CD4-positive, alpha-beta memory T cell (primary cell): ENCODE measurements at regions of chr11 and their contacts with region 1.

Region 1: GRCh38 chr11:33257897-33258630 is 883 bp downstream of the HIPK3 start:
- DNase-seq: peak; percentile 77 to 85 (median 80)
- H3K4me3 ChIP-seq: peak overlapping the region; percentile 53 to 85
- H3K4me3 Mint-ChIP-seq: peak overlapping the region; percentile 90 to 99 (median 96)
- H3K27ac ChIP-seq: peak overlapping the region; percentile 96
- H3K27ac Mint-ChIP-seq: peak overlapping the region; percentile 96 to 99 (median 98)
- H3K4me1 ChIP-seq: peaks cover 42% of the 10 kb centered on the region
- H3K4me1 Mint-ChIP-seq: peaks cover 29 to 51% (median 39%) of the 10 kb centered on the region in 4 donors
- H3K27me3 ChIP-seq: no peaks in the 10 kb centered on the region
- H3K27me3 Mint-ChIP-seq: no peaks in the 10 kb centered on the region

Region 2: DNA sequence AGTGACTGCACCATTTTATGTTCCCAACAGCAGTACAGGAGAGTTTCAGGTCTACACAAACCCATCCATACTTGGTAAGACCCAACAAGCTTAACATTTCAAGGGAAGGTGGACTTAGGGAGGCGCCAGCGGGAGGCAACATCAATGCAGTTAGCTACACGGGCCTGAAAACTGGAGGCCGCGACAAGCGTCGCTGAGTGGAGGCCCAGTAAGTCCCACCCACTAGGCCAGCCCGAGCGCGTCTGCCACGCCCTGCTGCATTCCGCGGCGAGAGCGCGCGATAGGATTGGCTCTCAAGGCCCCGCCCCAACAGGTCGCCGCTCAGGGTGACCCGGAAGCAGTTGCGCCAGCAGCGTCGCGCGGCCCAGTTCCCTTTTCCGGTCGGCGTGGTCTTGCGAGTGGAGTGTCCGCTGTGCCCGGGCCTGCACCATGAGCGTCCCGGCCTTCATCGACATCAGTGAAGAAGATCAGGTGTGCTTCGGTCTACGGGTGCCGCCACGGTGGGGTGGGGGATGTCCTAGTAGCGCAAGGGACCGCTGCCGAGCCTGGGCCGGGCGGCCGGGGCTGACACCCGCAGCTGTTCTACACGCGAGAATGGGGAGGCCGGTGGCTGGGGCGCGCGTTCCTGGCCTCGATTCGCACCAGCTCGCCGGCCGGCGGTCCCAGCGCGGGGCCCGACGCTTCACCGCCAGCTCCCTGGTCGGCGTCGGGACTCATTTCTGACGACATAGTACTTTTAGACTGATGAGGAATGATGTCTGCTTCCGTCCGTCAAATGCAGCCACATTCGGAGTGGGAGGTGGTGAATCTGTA is 674.4 kb before region 1 on chr11 and contains the start of gene EIF3M:
- CTCF ChIA-PET with region 1: no interaction called
- POLR2A ChIA-PET with region 1: interaction called, 3 read pairs
- intact Hi-C with region 1: loop called (anchors 5 kb)
- DNase-seq: peak; percentile 94 to 95 (median 94)
- H3K4me3 ChIP-seq: peak within 1 kb of the TSS; percentile 73 to 89
- H3K4me3 Mint-ChIP-seq: peak within 1 kb of the TSS; percentile 94 to 99 (median 97)
- H3K27ac ChIP-seq: peak within 1 kb of the TSS; percentile 93
- H3K27ac Mint-ChIP-seq: peak within 1 kb of the TSS; percentile 95 to 99 (median 98)
- H3K4me1 ChIP-seq: peaks cover 41% of the 10 kb centered on the region
- H3K4me1 Mint-ChIP-seq: peaks cover 31 to 51% (median 39%) of the 10 kb centered on the region in 4 donors
- H3K27me3 ChIP-seq: no peaks in the 10 kb centered on the region
- H3K27me3 Mint-ChIP-seq: no peaks in the 10 kb centered on the region
- total RNA-seq, gene EIF3M: 214 to 223 TPM

Region 3: DNA sequence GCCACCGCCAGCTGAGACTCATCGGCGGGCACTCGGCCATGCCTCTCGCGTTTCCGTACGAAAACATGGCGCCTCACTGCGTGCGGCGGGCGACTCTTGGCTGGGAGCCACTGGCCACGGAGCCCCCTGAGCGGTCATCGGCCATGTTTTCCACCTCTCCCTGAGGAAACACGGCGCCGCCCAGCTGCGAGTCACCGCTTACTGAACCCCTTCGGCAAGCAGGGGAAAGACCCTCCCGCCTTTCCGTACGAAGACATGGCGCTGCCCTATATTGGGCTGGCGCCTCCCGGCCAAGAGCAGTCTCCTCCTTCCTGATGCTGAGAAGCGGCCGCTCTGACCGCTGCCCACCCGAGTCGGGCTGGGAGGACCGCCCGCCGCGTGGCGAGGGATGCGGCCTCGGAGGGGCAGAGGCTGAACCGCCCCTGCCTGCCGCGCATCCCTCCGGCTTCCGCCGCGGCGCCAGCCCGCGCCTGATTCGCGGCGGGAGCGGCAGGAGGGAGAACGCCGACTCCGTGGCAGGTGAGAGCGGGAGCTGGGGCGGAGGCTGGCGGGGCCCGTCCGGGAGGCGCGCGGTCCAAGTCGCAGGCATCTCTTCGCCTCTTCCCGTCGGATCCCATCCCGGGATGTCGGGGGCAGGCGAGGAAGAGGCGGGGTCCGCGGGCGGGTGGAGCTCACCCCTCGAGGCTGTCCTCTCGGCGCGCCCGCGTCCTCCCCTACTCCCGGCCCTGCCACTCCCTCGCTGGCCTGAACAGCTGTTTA is 218.6 kb before region 1 on chr11 and contains the start of gene TCP11L1:
- CTCF ChIA-PET with region 1: no interaction called
- POLR2A ChIA-PET with region 1: interaction called, 4 read pairs
- intact Hi-C with region 1: loop called (anchors 1 kb)
- DNase-seq: peak; percentile 74 to 90 (median 80)
- H3K4me3 ChIP-seq: peak within 1 kb of the TSS; percentile 62 to 73
- H3K4me3 Mint-ChIP-seq: peak within 1 kb of the TSS; percentile 93 to 95 (median 95)
- H3K27ac ChIP-seq: peak within 1 kb of the TSS; percentile 78
- H3K27ac Mint-ChIP-seq: peak within 1 kb of the TSS; percentile 92 to 98 (median 95)
- H3K4me1 ChIP-seq: peaks cover 11% of the 10 kb centered on the region
- H3K4me1 Mint-ChIP-seq: peaks cover 8 to 19% (median 11%) of the 10 kb centered on the region in 4 donors
- H3K27me3 ChIP-seq: no peaks in the 10 kb centered on the region
- H3K27me3 Mint-ChIP-seq: peaks cover 2 to 7% of the 10 kb centered on the region in 2 donors
- total RNA-seq, gene TCP11L1: 20.2 to 20.9 TPM

Region 4: GRCh38 chr11:33329705-33330329 is 71.8 kb after region 1 on chr11:
- CTCF ChIA-PET with region 1: interaction called, 3 read pairs
- POLR2A ChIA-PET with region 1: no interaction called
- intact Hi-C with region 1: loop called (anchors 1 kb)
- DNase-seq: peak; percentile 47 to 56 (median 49)
- H3K4me3 ChIP-seq: no peak overlapping the region
- H3K4me3 Mint-ChIP-seq: no peak overlapping the region
- H3K27ac ChIP-seq: no peak overlapping the region
- H3K27ac Mint-ChIP-seq: peak overlapping the region in 4 of 7 donors; percentile 31 to 73 (median 54)
- H3K4me1 ChIP-seq: peaks cover under 1% of the 10 kb centered on the region
- H3K4me1 Mint-ChIP-seq: peaks cover 17 to 33% (median 24%) of the 10 kb centered on the region in 4 donors
- H3K27me3 ChIP-seq: no peaks in the 10 kb centered on the region
- H3K27me3 Mint-ChIP-seq: no peaks in the 10 kb centered on the region

Region 5: GRCh38 chr11:33463059-33463458 is 205.0 kb after region 1 on chr11:
- CTCF ChIA-PET with region 1: no interaction called
- POLR2A ChIA-PET with region 1: no interaction called
- intact Hi-C with region 1: no loop called
- DNase-seq: no peak
- H3K4me3 ChIP-seq: no peak overlapping the region
- H3K4me3 Mint-ChIP-seq: no peak overlapping the region
- H3K27ac ChIP-seq: no peak overlapping the region
- H3K27ac Mint-ChIP-seq: no peak overlapping the region
- H3K4me1 ChIP-seq: no peaks in the 10 kb centered on the region
- H3K4me1 Mint-ChIP-seq: no peaks in the 10 kb centered on the region
- H3K27me3 ChIP-seq: no peaks in the 10 kb centered on the region
- H3K27me3 Mint-ChIP-seq: peaks cover 8 to 11% of the 10 kb centered on the region in 2 donors

Region 6: DNA sequence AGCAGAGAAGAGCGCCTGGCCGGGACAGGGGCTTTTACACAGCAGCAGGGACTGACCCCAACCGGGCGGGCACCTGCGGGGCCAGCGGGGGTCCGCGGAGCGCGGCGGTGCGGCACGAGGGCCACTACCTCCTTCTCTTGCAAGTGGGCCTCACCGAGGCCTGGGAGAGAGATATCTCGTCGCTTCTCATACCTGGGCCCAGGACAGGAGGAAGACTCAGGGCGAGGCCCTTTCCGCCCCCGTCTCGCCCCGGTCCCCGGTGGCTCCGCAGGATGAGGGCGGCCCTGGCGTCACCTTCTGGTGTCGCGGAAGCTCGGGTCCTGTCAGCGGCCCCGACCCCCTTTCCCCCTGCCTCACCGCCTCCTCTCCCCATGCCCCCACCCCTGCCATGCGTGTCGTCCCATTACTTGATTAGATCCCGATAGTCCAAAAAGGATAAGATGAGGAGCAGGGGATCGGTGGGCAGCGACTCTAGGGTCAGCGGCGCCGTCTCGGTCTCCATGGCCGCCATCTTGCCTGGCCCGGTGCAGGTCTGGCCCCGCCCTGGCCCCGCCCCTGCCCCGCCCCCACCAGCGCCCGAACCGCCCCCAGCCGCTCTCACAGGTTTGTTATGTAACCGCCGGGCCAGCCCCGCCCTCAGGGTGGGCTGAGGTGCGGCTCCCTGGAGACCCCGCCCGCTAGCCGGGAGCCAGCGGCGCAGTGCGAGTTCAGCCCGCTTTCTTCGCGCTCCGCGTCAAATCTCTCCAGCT is 516.1 kb after region 1 on chr11 and contains the start of gene FBXO3:
- CTCF ChIA-PET with region 1: no interaction called
- POLR2A ChIA-PET with region 1: no interaction called
- intact Hi-C with region 1: loop called (anchors 5 kb)
- DNase-seq: peak; percentile 88 to 89 (median 89)
- H3K4me3 ChIP-seq: peak within 1 kb of the TSS; percentile 85 to 90
- H3K4me3 Mint-ChIP-seq: peak within 1 kb of the TSS; percentile 93 to 99 (median 96)
- H3K27ac ChIP-seq: peak within 1 kb of the TSS; percentile 79
- H3K27ac Mint-ChIP-seq: peak within 1 kb of the TSS; percentile 94 to 99 (median 99)
- H3K4me1 ChIP-seq: peaks cover 42% of the 10 kb centered on the region
- H3K4me1 Mint-ChIP-seq: peaks cover 31 to 64% (median 49%) of the 10 kb centered on the region in 4 donors
- H3K27me3 ChIP-seq: no peaks in the 10 kb centered on the region
- H3K27me3 Mint-ChIP-seq: peaks cover 0 to 3% of the 10 kb centered on the region in 2 donors
- total RNA-seq, gene FBXO3: 55.1 to 55.6 TPM